HepG2 (cell line): ENCODE measurements at regions of chr1 and their contacts with region 1.

Region 1: GRCh38 chr1:103025858-103026409 is 82.4 kb downstream of the COL11A1 start:
- DNase-seq: no peak
- ATAC-seq: no peak
- H3K4me3 ChIP-seq: no peak overlapping the region
- H3K27ac ChIP-seq: no peak overlapping the region
- H3K4me1 ChIP-seq: no peaks in the 10 kb centered on the region
- H3K27me3 ChIP-seq: no peaks in the 10 kb centered on the region; a peak in 1 of 5 replicates
- CTCF ChIP-seq: no peak
- EP300 ChIP-seq: no peak
- POLR2A ChIP-seq: no peak
- RAD21 ChIP-seq: no peak

Region 2: DNA sequence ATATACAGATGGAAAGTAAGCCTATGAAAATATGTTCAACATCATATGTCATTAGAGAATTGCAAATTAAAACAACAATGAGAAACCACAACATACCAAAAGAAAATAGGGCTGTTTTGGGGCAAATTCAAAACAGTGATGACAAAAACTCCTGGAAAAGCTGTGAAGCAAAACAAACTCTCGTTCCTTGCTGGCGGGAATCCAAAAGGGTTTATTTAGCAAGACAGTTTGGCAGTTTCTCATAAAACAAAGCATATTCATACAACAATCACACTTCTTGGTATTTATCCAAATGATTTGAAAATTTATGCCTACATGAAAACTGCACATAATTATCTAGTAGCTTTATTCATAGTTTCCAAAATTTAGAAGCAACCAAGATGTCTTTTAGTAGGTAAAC is 38.0 kb after region 1 on chr1:
- CTCF ChIA-PET with region 1: no interaction called
- POLR2A ChIA-PET with region 1: no interaction called
- in situ Hi-C with region 1: no loop called
- intact Hi-C with region 1: loop called (anchors 2 kb)
- DNase-seq: no peak
- ATAC-seq: no peak
- H3K4me3 ChIP-seq: no peak overlapping the region
- H3K27ac ChIP-seq: no peak overlapping the region
- H3K4me1 ChIP-seq: no peaks in the 10 kb centered on the region
- H3K27me3 ChIP-seq: no peaks in the 10 kb centered on the region
- CTCF ChIP-seq: no peak
- EP300 ChIP-seq: no peak
- POLR2A ChIP-seq: no peak
- RAD21 ChIP-seq: no peak